HepG2 (cell line): ENCODE measurements at regions of chr15 and their contacts with region 1.

Region 1: GRCh38 chr15:49046220-49047102 is at the start of gene SECISBP2L:
- DNase-seq: peak; percentile 93
- ATAC-seq: peak; percentile 98
- H3K4me3 ChIP-seq: peak within 1 kb of the TSS; percentile 87 to 93 (median 88)
- H3K27ac ChIP-seq: peak within 1 kb of the TSS; percentile 81
- H3K4me1 ChIP-seq: peaks cover 40% of the 10 kb centered on the region
- H3K27me3 ChIP-seq: no peaks in the 10 kb centered on the region
- CTCF ChIP-seq: peak; percentile 92
- EP300 ChIP-seq: peak in 1 of 2 experiments; percentile 55; a peak in 2 of 4 replicates
- POLR2A ChIP-seq: peak; percentile 54 to 87
- RAD21 ChIP-seq: peak; percentile 79
- total RNA-seq, gene SECISBP2L: 15.6 and 21.1 TPM in 2 replicates

Region 2: GRCh38 chr15:48810414-48811317 is 235.8 kb before region 1 on chr15 and contains the start of gene CEP152:
- CTCF ChIA-PET with region 1: no interaction called
- POLR2A ChIA-PET with region 1: interaction called, 5 read pairs
- in situ Hi-C with region 1: no loop called
- intact Hi-C with region 1: loop called (anchors 5 kb)
- DNase-seq: peak; percentile 98
- ATAC-seq: peak; percentile 98
- H3K4me3 ChIP-seq: peak within 1 kb of the TSS; percentile 77 to 93 (median 87)
- H3K27ac ChIP-seq: peak within 1 kb of the TSS; percentile 73
- H3K4me1 ChIP-seq: peaks cover 26% of the 10 kb centered on the region
- H3K27me3 ChIP-seq: peaks cover 0 to 9% of the 10 kb centered on the region in 2 experiments; a peak in 2 of 5 replicates
- CTCF ChIP-seq: no peak
- EP300 ChIP-seq: no peak
- POLR2A ChIP-seq: peak; percentile 61 to 79
- RAD21 ChIP-seq: no peak
- total RNA-seq, gene CEP152: 14.7 and 20.2 TPM in 2 replicates

Region 3: DNA sequence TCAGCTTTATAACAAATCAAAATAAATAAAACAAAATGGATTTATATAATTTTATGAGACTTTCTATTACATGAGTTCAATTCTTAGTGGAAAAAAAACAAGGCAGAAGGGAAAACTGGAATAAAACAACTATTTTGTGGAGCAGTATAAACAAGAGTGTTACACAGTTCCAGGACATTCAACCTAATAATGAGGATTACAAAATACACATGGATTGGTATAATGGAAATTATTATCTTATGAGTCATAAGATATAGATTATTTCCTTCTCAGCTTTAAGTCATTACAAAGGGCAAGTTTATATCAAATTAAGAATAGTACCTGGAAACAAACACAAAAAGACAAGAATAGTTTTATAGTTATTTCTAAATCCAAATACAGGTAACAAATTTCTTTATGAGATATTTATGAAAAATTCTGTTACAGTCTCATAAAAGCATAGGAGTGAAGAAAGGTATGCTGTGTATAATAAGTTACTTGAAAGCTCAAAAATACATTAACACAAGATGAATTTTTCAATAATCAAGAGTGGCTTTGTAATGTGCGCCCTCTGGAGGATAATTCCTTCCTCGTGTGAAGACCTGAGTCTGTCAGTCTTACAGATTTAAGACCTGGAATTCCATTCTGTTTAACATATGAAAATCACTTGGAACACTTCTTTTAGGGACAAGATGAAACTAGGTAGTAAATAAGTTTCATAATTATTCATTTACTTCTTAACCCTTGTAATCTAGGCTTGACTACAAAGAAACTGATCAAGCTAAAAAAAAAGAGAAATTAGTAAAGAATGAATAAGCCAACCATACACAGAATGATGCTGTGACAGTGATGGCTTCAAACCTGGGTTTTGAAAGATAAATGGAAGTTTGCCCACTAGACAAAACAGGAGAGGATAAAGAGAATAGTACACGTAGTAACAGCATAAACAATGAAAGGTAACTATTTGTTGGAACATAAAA is 99.5 kb after region 1 on chr15:
- CTCF ChIA-PET with region 1: interaction called, 3 read pairs
- POLR2A ChIA-PET with region 1: no interaction called
- in situ Hi-C with region 1: no loop called
- intact Hi-C with region 1: loop called (anchors 1 kb)
- DNase-seq: peak; percentile 45
- ATAC-seq: peak; percentile 63
- H3K4me3 ChIP-seq: no peak overlapping the region
- H3K27ac ChIP-seq: no peak overlapping the region
- H3K4me1 ChIP-seq: no peaks in the 10 kb centered on the region; the same call in 1 of the 2 replicates
- H3K27me3 ChIP-seq: no peaks in the 10 kb centered on the region
- CTCF ChIP-seq: peak; percentile 62
- EP300 ChIP-seq: no peak
- POLR2A ChIP-seq: no peak
- RAD21 ChIP-seq: no peak

Region 4: GRCh38 chr15:49169880-49170597 is 123.6 kb after region 1 on chr15 and contains the start of gene GALK2:
- CTCF ChIA-PET with region 1: no interaction called
- POLR2A ChIA-PET with region 1: interaction called, 12 read pairs
- in situ Hi-C with region 1: no loop called
- intact Hi-C with region 1: no loop called
- DNase-seq: peak; percentile 84
- ATAC-seq: peak; percentile 100
- H3K4me3 ChIP-seq: peak within 1 kb of the TSS; percentile 72 to 77 (median 74)
- H3K27ac ChIP-seq: peak within 1 kb of the TSS; percentile 79
- H3K4me1 ChIP-seq: peaks cover 21% of the 10 kb centered on the region
- H3K27me3 ChIP-seq: no peaks in the 10 kb centered on the region
- CTCF ChIP-seq: no peak
- EP300 ChIP-seq: no peak
- POLR2A ChIP-seq: peak; percentile 71 to 89
- RAD21 ChIP-seq: no peak
- total RNA-seq, gene GALK2: 32.8 and 45.5 TPM in 2 replicates

Region 5: DNA sequence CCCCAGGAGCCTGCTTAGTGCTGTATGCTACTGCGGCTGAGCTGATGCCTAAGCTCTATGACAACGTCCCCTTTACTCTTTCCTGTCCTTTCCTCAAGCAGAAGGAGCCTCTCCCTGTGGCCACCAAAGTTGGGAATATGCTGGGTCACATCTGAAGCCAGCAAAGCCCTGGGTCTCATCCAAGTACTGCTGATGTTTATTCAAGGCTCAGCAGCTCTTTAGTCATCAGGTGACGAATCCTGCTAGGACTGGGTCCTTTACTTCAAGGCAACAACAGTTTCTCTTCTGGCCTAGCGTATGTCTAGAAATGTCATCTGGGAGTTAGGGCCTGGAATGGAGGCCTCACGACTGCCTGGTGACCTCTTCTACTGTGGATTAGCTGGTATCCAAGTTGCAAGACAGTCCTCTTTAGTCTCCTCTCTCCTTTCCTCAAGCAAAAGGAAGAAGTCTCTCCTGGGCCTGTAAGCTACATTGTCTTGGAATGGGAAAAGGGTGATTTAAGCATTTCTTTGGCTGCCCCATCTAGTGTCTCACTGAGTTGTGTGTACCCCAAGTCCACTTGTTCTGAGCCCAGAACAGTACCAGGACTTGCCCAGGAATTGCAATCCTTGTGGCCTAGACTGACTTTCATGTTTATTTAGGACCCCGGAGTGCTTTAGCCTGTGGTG is 1984.3 kb after region 1 on chr15:
- CTCF ChIA-PET with region 1: no interaction called
- POLR2A ChIA-PET with region 1: no interaction called
- in situ Hi-C with region 1: no loop called
- intact Hi-C with region 1: no loop called
- DNase-seq: peak; percentile 13
- ATAC-seq: peak; percentile 43
- H3K4me3 ChIP-seq: no peak overlapping the region
- H3K27ac ChIP-seq: no peak overlapping the region
- H3K4me1 ChIP-seq: no peaks in the 10 kb centered on the region
- H3K27me3 ChIP-seq: no peaks in the 10 kb centered on the region
- CTCF ChIP-seq: no peak
- EP300 ChIP-seq: no peak
- POLR2A ChIP-seq: no peak
- RAD21 ChIP-seq: no peak